ENCODE measurements at regions of chr19 and their contacts with region 1.

Region 1: GRCh38 chr19:9839415-9839814 is 4.3 kb downstream of the PIN1 start:
- DNase-seq: no peak
- ATAC-seq: no peak
- H3K4me3 Mint-ChIP-seq: no peak overlapping the region
- H3K27ac Mint-ChIP-seq: no peak overlapping the region
- H3K4me1 Mint-ChIP-seq: peaks cover 24% of the 10 kb centered on the region
- H3K27me3 Mint-ChIP-seq: no peaks in the 10 kb centered on the region
- CTCF ChIP-seq: no peak

Region 2: DNA sequence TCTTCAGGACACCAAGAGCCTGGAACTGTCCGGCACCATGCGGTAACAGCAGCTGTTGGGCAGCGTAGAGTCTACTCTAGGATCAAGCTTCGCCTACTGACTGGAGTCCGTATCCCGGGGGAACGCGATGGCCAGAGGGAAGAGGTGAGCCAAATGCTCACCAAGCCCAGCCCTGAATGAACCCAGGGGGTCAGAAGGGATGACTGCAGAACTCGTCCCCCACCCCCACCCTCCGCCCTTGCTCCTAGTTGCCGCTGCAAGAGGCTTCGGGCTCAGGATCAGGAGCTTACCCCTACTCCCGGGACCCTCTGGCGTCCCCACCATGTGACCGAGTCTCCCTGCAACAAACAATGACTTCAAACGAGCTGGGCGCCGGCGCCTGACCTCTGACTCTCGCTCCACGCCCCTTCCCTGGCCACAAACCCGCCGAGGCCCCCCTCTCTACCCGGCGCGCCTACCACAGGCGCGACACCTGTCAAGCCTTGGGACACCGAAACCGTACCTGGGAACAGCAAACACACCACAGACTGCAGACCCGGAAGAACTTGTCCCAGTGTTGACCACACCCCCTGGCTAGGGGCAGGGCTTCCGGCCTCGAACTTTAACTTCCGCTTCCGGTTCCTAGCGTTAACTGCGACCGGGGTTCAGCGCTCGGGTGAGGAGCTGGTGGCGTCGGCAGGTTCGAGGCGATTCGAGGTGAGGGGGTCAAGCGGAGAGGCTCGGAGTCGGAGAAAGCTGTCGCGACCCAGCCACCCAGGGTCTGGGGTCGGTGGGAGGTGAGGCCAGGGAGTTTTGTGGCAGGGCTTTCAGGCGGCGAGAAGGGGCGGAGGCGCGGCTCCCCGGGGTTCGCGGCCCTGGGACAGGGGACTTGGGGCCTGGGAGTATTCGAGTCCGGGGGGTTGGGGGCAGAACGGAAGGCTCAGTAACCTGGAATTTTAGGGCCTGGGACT is 11.9 kb before region 1 on chr19 and contains the start of gene UBL5:
- CTCF ChIA-PET with region 1: no interaction called
- POLR2A ChIA-PET with region 1: interaction called, 11 read pairs
- intact Hi-C with region 1: no loop called
- DNase-seq: peak; percentile 92
- ATAC-seq: peak; percentile 97
- H3K4me3 Mint-ChIP-seq: peak within 1 kb of the TSS; percentile 99
- H3K27ac Mint-ChIP-seq: peak within 1 kb of the TSS; percentile 98
- H3K4me1 Mint-ChIP-seq: peaks cover 20% of the 10 kb centered on the region
- H3K27me3 Mint-ChIP-seq: no peaks in the 10 kb centered on the region
- CTCF ChIP-seq: no peak
- total RNA-seq, gene UBL5: 313 to 321 TPM